ENCODE measurements at regions of chr10 and their contacts with region 1.

Region 1: DNA sequence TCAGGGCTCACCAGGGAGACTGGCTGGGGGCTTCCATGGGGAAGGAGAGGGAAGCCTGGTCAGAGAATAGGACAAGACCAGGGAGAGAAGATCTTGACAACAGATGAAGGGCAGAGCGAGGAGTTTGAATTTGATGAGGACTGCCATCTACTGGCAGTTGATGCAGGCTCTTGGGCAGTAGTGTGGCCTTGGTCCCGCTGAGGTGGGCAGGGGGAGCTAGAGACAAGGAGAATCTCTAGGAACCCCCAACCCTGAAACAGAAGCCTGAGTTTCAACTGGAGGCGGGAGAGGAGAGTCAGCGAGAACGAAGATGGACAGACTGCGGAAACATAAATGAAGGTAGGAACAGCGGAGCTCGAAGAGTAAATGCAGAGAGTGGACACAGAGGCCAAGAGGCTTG is 81.0 kb downstream of the PPP1R3C start:
- DNase-seq: peak in 3 of 6 donors; percentile 42 to 55 (median 49)
- ATAC-seq: peak; percentile 61 to 78 (median 71)
- H3K4me3 ChIP-seq: no peak overlapping the region
- H3K27ac ChIP-seq: no peak overlapping the region
- H3K4me1 ChIP-seq: peaks cover 7 to 22% (median 19%) of the 10 kb centered on the region in 3 donors
- H3K27me3 ChIP-seq: no peaks in the 10 kb centered on the region
- CTCF ChIP-seq: peak; percentile 9 to 53 (median 44)

Region 2: GRCh38 chr10:91493313-91493712 is 58.5 kb before region 1 on chr10:
- intact Hi-C with region 1: loop called in 1 of 3 experiments (anchors 5 kb)
- DNase-seq: no peak
- ATAC-seq: peak in 3 of 4 donors; percentile 58 to 84 (median 70)
- H3K4me3 ChIP-seq: no peak overlapping the region
- H3K27ac ChIP-seq: no peak overlapping the region
- H3K4me1 ChIP-seq: no peaks in the 10 kb centered on the region
- H3K27me3 ChIP-seq: no peaks in the 10 kb centered on the region
- CTCF ChIP-seq: peak in 3 of 4 donors; percentile 12 to 21 (median 17)

Region 3: GRCh38 chr10:91627344-91628102 is 75.7 kb after region 1 on chr10:
- intact Hi-C with region 1: loop called in 2 of 3 experiments (anchors 2 to 10 kb)
- DNase-seq: no peak
- ATAC-seq: peak in 2 of 4 donors; percentile 14 to 30
- H3K4me3 ChIP-seq: no peak overlapping the region
- H3K27ac ChIP-seq: no peak overlapping the region
- H3K4me1 ChIP-seq: peaks cover 0 to 21% (median 6%) of the 10 kb centered on the region in 3 donors
- H3K27me3 ChIP-seq: no peaks in the 10 kb centered on the region
- CTCF ChIP-seq: no peak

Measured in pancreas (tissue), 10 donors.